OCI-LY7 (cell line): ENCODE measurements at regions of chr2 and their contacts with region 1.

Region 1: GRCh38 chr2:112121682-112122254 is 16.4 kb upstream of the FBLN7 start:
- DNase-seq: peak; percentile 57
- H3K4me3 ChIP-seq: no peak overlapping the region
- H3K27ac ChIP-seq: no peak overlapping the region
- H3K4me1 ChIP-seq: no peaks in the 10 kb centered on the region
- CTCF ChIP-seq: peak; percentile 96

Region 2: DNA sequence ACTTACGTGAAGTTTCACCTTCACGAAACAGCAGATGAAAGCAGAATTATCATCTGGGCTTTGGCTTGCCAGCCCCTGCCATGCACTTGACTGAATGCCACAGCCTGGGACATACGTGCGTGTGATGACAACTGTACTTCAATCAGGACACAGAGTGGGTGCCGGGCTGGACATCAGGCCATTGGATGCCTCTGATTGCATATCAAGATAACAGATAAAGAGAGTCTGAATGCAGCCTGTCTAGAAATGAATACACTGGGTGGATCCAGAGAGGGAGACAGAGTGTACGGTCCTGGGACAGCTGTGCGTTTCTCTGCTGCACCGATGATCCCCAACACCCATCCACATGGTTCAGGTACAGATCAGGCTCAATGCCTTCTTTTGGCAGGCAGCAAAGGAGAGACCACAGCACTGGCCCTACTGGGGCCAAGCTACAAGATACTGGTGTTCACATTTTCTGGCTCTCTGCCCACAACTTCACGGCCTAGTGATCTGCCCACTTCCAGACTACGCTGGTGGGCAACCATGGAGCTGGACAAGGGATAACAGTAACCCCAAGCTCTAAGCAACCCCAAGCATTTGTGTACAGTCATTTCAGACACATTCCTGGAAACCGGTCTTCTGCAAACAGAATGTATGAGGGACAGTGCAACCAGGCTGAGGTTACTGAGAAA is 52.0 kb after region 1 on chr2:
- CTCF ChIA-PET with region 1: no interaction called
- POLR2A ChIA-PET with region 1: no interaction called
- intact Hi-C with region 1: no loop called
- DNase-seq: no peak
- H3K4me3 ChIP-seq: no peak overlapping the region
- H3K27ac ChIP-seq: no peak overlapping the region
- H3K4me1 ChIP-seq: peaks cover 4% of the 10 kb centered on the region
- CTCF ChIP-seq: no peak

Region 3: DNA sequence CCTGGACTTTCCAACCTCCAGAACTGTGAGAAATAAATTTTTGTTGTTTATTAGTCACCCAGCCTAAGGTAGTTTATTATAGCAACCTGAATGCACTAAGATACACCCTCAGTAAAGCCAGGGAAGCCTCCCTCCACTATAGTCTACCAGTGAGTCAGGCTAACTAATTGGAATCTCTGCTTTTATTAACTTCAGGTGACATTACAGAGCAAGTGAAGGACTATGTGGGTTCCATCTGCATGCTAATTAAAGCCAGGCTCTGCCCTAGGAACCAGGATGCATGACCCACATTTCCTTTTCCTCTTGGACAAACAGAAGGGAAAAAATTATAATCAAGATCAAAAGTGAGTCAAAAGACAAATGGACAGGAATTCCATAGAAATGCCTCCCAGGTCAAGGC is 77.0 kb after region 1 on chr2:
- CTCF ChIA-PET with region 1: no interaction called
- POLR2A ChIA-PET with region 1: interaction called, 4 read pairs
- intact Hi-C with region 1: loop called (anchors 10 kb)
- DNase-seq: no peak
- H3K4me3 ChIP-seq: no peak overlapping the region
- H3K27ac ChIP-seq: no peak overlapping the region
- H3K4me1 ChIP-seq: no peaks in the 10 kb centered on the region
- CTCF ChIP-seq: no peak

Region 4: DNA sequence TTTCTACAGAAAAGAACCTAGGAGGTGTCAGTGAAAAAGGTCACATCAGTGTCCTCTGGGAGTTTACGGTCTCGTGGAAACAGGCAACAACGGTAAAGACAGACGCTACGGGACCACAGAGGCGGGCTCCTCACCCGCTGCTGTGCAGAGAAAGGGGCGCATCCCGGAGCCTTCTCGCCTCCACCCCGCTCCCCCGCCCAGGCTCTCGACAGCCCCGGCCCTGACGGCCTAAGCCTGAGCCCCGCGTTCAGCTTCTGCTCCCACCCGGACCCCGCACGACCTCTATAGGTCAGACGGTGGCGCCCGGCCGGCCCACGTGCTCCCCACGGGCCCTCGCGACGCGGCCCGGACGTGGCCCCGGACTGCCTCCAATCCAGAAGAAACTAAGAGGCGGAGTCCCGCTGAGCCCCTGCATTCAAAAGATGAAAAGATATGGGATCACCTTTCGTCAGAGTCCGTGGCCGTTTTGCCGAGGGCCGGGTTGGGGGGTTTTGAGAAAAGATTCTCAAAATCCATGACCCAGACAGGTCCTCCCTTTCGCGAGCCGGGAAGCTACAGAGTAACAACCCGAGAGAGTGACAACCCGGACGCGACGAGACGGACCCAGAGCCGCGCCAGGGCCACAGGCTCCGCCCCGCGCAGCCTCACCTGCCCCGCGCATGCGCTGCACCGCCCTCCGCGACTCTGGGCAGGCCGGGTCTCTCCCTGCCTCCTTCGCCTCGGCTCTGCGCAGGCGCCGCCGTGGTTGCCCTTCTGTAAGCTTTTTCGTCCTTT is 132.9 kb after region 1 on chr2 and contains the start of gene ZC3H8:
- CTCF ChIA-PET with region 1: no interaction called
- POLR2A ChIA-PET with region 1: no interaction called
- intact Hi-C with region 1: loop called (anchors 5 kb)
- DNase-seq: peak; percentile 93
- H3K4me3 ChIP-seq: peak within 1 kb of the TSS; percentile 83
- H3K27ac ChIP-seq: peak within 1 kb of the TSS; percentile 70
- H3K4me1 ChIP-seq: peaks cover 21% of the 10 kb centered on the region
- CTCF ChIP-seq: peak; percentile 45
- total RNA-seq, gene ZC3H8: 12.3 and 15.0 TPM in 2 replicates